ENCODE measurements at regions of chr16 and their contacts with region 1.

Region 1: DNA sequence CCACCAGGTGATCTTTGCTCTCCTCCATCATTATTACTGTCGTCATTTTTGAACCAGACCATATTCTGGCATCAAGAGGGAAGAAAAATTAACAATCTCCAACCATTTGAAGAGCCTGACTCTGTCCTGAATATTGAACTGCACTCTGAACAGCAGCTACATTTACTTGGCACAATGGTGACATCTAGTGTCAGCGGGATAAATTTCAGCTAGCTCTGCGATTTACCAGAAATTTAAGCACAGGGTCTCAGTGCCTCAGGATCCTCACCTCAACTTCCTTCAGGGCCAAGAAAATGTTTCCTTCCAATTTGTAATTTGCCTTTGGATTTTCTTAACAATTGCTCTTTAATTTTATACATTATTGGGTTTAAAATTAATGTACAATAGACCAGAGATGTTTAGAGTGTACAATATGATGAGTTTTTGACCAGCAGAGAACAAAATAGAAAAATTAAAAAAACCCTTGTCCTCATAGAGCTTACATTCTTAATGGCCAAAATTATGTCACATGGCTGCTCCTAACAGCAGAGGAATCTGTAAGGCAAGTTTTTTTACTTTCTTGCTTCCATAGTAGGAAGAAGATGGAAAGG is 10.7 kb upstream of the ZNF19 start:
- DNase-seq: peak; percentile 67
- H3K4me3 Mint-ChIP-seq: no peak overlapping the region
- H3K27ac Mint-ChIP-seq: no peak overlapping the region
- H3K4me1 Mint-ChIP-seq: no peaks in the 10 kb centered on the region
- H3K27me3 Mint-ChIP-seq: no peaks in the 10 kb centered on the region

Region 2: DNA sequence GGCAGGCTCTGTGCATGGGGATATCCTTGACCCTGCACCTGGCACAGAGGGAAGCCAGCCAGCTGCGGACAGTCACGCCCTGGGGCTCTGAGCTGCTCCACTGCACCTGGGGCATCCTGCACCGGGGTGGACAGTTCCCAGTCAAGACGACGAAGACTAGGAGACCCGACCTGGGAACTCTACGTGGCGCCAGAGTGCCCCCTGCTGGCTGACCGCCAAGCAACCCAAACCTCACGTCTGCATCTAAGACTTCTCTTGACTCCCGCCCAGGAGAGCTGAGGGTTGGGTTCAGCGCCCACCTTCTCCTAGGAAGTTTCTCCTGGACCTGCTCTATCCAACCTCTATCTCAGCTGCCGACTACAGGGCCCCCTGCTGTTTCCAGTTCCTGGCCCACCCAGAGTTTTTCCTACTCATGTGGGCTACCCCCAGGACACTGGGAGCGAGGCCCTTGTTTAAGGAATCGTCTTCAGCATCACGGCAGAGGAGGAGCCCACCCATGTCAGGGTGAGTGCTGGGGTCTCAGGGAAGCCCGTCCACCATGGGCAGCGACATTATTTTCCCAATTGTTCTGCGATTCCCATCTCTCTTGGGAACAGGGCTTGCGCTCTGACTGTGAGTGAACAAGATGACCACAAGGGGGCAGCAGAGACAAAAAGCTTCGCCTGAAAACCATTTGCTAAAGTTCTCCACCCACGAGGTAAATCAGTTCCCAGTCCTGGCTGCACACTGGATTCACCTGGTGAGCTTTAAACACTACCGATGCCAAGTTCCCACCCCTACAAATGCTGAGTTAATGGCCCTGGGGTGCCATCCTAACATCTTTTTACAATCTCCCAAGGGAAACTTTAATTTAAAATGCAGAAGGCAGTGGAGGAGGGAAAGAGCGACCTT is 87.4 kb before region 1 on chr16:
- CTCF ChIA-PET with region 1: interaction called, 21 read pairs
- POLR2A ChIA-PET with region 1: no interaction called
- DNase-seq: peak; percentile 76
- H3K4me3 Mint-ChIP-seq: no peak overlapping the region
- H3K27ac Mint-ChIP-seq: no peak overlapping the region
- H3K4me1 Mint-ChIP-seq: peaks cover 4% of the 10 kb centered on the region
- H3K27me3 Mint-ChIP-seq: peaks cover 20% of the 10 kb centered on the region

Region 3: GRCh38 chr16:71526111-71526631 is 26.3 kb after region 1 on chr16 and contains the start of gene CHST4:
- CTCF ChIA-PET with region 1: no interaction called
- POLR2A ChIA-PET with region 1: no interaction called
- DNase-seq: no peak
- H3K4me3 Mint-ChIP-seq: no peak within 1 kb of the TSS
- H3K27ac Mint-ChIP-seq: no peak within 1 kb of the TSS
- H3K4me1 Mint-ChIP-seq: no peaks in the 10 kb centered on the region
- H3K27me3 Mint-ChIP-seq: peaks cover 20% of the 10 kb centered on the region
- total RNA-seq, gene CHST4: not detected

Region 4: DNA sequence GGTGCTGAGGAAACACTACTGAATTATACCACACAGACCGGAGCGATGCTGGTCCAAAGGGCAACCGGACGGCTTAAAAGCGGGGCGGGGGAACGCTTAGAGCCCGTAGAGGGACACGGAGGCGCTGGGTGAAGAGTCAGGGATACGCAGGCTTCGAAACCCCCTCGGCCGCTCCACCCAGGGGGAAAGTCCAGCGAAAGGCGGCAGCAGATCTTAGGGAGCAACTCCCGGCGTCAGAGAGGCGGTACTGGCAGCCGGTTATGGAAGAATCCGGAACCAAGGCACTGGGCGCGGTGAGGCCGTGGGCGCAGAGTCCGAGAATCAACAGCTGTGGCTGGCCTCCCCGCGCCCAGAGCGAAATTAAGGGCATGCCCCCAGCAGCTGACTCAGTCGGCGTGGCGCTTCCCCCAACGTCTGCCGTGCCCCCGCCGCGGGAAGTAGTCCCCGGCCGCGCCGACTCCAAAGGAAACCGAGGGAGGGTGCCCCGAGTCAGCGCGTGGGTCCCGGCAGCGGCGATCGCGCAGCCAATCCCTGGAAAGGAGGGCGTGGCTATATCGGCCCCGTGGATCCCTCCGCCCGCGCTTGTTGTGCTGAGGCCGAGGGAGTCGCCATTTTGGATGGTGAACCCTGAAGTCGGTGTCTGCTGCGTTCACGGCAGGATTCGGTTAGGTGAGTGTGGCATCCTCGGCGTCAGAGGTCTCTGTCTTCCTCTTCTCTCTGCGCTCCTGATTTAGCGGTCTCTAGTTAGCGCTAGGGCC is 395.2 kb after region 1 on chr16 and contains the start of gene IST1:
- CTCF ChIA-PET with region 1: no interaction called
- POLR2A ChIA-PET with region 1: no interaction called
- DNase-seq: peak; percentile 98
- H3K4me3 Mint-ChIP-seq: peak within 1 kb of the TSS; percentile 93
- H3K27ac Mint-ChIP-seq: peak within 1 kb of the TSS; percentile 95
- H3K4me1 Mint-ChIP-seq: peaks cover 30% of the 10 kb centered on the region
- H3K27me3 Mint-ChIP-seq: no peaks in the 10 kb centered on the region
- total RNA-seq, gene IST1: 180 to 191 TPM

Measured in activated CD4-positive, alpha-beta T cell treated with anti-CD3 and anti-CD28 coated beads, Interleukin-2, amount 10 ng/mL, durations not matched to agents 7 days and 5 days (primary cell).